ENCODE measurements at regions of chr10 and their contacts with region 1.

Region 1: GRCh38 chr10:75099952-75100763 is 11.3 kb upstream of the SAMD8 start:
- DNase-seq: peak; percentile 91
- ATAC-seq: peak; percentile 83

Region 2: DNA sequence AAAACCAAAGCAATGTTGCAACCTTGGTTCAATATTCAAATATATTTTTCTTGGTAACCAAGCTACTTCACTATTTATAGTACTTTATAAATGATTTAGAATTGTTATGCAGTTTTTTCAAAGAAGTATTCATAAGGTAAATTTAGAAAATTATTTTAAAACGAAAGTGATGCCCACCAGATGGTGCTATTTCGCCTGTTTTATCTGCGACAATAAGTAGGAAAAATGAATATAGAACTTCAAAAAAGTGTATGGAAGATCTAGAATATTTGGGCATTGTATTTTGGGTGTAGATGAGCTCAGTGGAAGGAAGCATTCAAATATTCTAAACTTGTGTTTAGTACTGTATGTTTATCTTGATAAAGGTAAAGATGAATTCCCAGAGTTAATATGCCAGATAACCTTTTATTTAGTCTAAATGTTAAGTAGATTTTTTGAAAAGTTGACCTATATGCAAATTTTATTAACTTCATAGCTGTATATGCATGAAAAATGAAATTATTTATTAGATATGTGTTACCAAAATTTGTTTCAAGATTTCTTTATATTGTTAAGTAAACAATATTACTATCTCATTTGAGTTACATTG is 856.0 kb before region 1 on chr10:
- intact Hi-C with region 1: loop called (anchors 2 kb)
- DNase-seq: no peak
- ATAC-seq: no peak

Region 3: DNA sequence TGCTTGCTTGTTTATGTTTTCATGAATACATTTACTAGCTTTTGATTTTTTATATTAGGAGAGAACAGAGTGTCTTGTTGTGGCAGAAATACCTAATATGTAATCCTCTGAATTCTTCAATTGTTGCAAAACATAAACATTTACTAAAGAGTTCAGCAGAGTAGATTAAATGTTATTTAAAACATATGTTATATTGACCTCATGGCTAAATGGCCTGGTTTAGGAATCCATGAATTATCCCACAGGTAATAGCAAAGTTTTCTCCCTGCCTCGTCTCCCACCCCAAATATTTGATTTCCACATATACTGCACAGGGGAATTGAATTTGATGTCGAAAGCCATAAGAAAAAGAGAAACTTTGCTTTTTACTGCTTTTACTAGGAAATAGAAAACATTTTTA is 837.3 kb before region 1 on chr10:
- intact Hi-C with region 1: loop called (anchors 2 kb)
- DNase-seq: no peak
- ATAC-seq: no peak

Region 4: DNA sequence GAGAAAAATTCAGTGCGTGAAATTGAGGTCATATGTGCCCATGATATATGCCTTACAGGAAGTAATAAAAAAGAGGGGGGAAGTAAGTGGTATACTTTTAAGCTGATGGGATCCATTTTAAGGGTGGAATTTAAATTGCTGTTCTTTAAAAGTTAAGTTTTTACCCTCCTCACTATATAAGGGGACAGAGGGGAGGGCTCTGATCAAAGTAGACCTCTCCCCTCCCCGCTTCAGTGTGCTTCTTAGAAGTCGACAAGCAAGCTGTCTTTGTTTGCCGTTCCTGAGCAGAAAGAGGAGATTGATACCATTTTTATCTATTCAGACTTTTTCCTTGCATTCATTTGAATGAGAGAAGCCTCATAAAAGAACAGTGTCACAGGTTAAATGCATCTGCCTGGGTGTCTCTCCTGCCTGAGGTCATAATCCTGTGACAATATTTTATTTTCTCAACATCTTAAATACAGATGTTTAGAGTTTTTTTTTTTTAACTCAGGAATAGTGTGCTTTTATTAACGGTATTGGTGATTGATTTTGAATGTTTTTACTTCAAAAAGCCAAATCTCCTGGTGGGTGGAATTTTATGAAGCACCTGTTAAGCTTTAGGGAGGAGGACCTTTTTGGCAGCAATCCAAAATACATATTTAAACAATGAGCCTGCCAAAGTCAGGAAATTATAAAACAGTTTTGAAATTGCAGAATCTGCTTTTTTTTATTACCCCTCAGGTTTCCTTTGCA is 132.1 kb before region 1 on chr10:
- intact Hi-C with region 1: no loop called
- DNase-seq: no peak
- ATAC-seq: no peak

Region 5: GRCh38 chr10:75035975-75036708 is 64.0 kb before region 1 on chr10:
- intact Hi-C with region 1: loop called (anchors 10 kb)
- DNase-seq: no peak
- ATAC-seq: no peak

Measured in Right ventricle myocardium inferior (tissue), 1 donor.